MCF 10A (cell line): ENCODE measurements at regions of chr1 and their contacts with region 1.

Region 1: DNA sequence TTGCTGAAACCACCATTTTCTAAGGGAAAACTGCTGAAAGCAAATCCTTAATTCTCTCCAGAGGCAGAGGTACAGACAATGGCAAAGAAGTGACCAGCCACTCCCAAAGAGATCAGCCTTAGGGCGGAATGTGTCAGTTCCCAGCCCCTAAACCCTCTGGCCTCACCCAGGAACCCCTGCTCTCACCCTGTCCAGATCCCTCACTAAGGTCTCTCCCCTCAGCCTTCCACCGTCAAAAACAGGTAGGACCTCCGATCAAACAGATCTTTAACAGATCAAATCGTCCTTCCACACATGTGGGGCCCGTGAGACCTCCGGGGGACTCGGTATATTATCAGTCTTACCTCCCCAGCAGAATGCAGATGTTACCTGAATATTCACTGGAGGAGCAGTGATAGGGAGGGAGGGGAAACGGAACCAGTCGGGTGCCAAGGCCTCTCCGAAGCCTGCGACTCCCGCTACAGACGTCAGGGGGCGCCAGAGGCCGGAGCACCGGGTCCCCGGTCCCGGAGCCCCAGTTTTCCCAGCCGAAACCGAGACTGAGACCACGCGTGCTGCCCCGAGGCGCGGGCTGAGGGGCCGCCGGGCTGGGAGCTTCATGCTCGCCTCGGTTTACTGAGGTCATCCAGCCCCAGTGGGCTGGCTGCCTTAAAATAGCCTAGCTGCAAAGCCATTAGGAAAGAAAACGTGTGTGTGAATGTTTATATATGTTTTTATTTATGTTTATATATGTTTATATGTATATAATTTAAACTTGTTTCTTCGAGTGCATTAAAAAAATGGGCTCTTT is 23.6 kb downstream of the GPA33 start:
- DNase-seq: peak; percentile 84
- H3K4me3 Mint-ChIP-seq: peak overlapping the region; percentile 32
- H3K27ac Mint-ChIP-seq: peak overlapping the region; percentile 43
- H3K4me1 Mint-ChIP-seq: no peaks in the 10 kb centered on the region
- H3K27me3 Mint-ChIP-seq: peaks cover 18% of the 10 kb centered on the region
- CTCF ChIP-seq: peak; percentile 100

Region 2: DNA sequence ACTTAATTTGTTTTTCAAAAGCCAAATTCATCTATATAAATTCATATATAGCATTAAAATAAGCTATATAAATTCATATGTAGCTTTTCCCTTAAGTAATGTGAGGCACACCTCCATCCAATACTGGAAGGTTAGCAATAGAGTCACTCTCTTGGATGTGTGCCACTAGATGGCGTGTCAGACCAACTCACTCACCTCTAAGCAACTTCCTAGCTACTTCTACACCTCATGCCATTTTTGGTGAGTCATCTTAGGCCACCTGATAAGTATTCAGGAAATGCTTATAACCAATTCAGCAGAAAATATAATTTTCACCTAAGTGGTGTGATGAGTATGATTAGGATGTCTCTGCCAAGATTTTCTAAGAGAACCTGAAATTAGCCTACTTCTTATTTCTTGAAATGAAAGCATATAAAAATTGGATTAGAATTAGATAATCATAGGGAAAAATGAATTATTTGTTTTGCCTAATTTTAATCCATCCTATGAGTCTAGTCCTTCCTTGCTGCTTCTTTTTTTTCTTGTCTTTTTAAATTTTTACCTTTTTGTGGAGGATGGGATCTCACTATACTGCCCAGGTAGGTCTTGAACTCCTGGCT is 156.0 kb before region 1 on chr1:
- CTCF ChIA-PET with region 1: interaction called, 1,662 read pairs
- POLR2A ChIA-PET with region 1: interaction called, 93 read pairs
- intact Hi-C with region 1: no loop called
- DNase-seq: peak; percentile 98
- H3K4me3 Mint-ChIP-seq: no peak overlapping the region
- H3K27ac Mint-ChIP-seq: no peak overlapping the region
- H3K4me1 Mint-ChIP-seq: no peaks in the 10 kb centered on the region
- H3K27me3 Mint-ChIP-seq: no peaks in the 10 kb centered on the region
- CTCF ChIP-seq: peak; percentile 91

Region 3: DNA sequence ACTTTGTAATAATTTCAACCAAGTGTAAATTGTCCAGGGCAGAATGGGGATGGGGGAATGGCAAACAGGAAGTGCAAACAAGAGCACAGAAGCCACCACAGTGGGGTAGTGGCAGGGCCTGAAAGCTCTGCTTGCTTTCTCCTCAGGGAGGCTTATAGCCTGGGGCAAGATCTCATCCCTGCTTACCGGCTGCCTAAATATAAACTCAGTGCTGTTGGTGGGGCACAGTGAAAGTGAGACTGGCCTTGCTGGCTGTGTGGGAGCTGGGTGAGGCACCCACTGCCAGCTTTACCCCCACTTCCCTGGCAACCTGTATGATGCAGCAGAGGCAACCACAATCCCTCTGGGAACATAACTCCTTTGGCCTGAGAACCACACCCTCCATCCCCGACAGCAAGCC is 42.6 kb after region 1 on chr1:
- CTCF ChIA-PET with region 1: interaction called, 10 read pairs
- POLR2A ChIA-PET with region 1: no interaction called
- intact Hi-C with region 1: no loop called
- DNase-seq: peak; percentile 26
- H3K4me3 Mint-ChIP-seq: no peak overlapping the region
- H3K27ac Mint-ChIP-seq: peak overlapping the region; percentile 47
- H3K4me1 Mint-ChIP-seq: peaks cover 17% of the 10 kb centered on the region
- H3K27me3 Mint-ChIP-seq: no peaks in the 10 kb centered on the region
- CTCF ChIP-seq: no peak

Region 4: DNA sequence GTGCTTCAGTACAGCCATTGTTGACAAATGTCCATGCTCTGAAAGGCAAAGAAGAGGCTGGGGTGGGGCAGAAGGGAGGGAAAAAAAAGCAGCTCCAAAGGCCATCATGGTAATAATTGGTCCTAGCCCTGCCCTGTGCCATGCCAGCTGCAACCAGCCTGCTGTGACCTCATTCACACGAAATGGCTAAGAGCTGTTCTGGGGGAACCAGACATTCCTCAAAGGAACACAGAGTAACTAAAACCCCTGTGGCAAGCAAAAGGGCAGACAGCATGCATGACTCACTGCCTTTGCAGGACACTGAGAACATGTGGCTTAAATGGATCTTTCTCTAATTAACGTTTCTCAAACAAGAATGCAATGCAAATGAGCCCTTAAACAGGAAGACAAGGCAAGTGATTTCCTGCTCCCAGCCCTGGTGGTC is 69.7 kb after region 1 on chr1:
- CTCF ChIA-PET with region 1: interaction called, 259 read pairs
- POLR2A ChIA-PET with region 1: no interaction called
- intact Hi-C with region 1: no loop called
- DNase-seq: peak; percentile 85
- H3K4me3 Mint-ChIP-seq: no peak overlapping the region
- H3K27ac Mint-ChIP-seq: no peak overlapping the region
- H3K4me1 Mint-ChIP-seq: peaks cover 21% of the 10 kb centered on the region
- H3K27me3 Mint-ChIP-seq: no peaks in the 10 kb centered on the region
- CTCF ChIP-seq: no peak

Region 5: GRCh38 chr1:167263819-167264464 is 197.4 kb after region 1 on chr1:
- CTCF ChIA-PET with region 1: interaction called, 40 read pairs
- POLR2A ChIA-PET with region 1: interaction called, 3 read pairs
- intact Hi-C with region 1: loop called (anchors 2 kb)
- DNase-seq: no peak
- H3K4me3 Mint-ChIP-seq: no peak overlapping the region
- H3K27ac Mint-ChIP-seq: no peak overlapping the region
- H3K4me1 Mint-ChIP-seq: peaks cover 4% of the 10 kb centered on the region
- H3K27me3 Mint-ChIP-seq: no peaks in the 10 kb centered on the region
- CTCF ChIP-seq: no peak

Region 6: DNA sequence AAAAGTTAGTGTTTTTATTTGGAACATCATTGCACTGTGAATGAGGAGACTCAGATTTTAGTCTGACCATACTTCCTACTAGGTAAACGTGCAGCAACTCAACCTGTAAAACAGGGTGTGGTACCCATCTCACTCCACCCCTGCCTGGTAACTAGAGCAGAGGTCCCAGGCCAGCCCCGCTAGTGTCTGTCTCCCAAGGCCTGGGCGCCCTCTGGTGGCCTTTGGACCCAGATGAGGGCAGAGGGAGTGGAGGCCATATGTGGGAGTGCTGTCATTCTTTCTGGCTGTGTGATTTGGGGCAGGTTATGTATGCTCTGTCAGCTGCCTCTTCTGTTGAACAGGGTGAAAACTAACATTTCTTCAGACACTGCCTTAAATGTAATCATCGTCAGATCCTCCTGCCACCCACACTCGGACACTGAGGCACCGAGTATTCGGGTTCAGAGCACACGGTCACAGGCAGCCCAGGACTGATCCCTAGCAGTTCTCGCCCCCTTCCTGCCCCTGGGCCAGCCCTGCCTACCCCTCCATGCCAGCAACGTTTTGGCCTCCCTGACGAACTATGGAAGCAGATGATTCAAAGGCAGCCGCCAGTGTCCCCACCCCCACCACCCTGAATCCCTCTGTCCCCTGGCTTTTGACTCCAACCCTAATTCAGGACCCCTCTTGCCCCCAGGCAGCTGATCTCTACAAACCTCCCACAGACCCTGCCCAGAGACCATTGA is 375.8 kb after region 1 on chr1:
- CTCF ChIA-PET with region 1: interaction called, 51 read pairs
- POLR2A ChIA-PET with region 1: no interaction called
- intact Hi-C with region 1: loop called (anchors 1 kb)
- DNase-seq: peak; percentile 94
- H3K4me3 Mint-ChIP-seq: no peak overlapping the region
- H3K27ac Mint-ChIP-seq: no peak overlapping the region
- H3K4me1 Mint-ChIP-seq: peaks cover 6% of the 10 kb centered on the region
- H3K27me3 Mint-ChIP-seq: peaks cover 18% of the 10 kb centered on the region
- CTCF ChIP-seq: peak; percentile 98